ENCODE measurements at regions of chr19 and their contacts with region 1.

Region 1: DNA sequence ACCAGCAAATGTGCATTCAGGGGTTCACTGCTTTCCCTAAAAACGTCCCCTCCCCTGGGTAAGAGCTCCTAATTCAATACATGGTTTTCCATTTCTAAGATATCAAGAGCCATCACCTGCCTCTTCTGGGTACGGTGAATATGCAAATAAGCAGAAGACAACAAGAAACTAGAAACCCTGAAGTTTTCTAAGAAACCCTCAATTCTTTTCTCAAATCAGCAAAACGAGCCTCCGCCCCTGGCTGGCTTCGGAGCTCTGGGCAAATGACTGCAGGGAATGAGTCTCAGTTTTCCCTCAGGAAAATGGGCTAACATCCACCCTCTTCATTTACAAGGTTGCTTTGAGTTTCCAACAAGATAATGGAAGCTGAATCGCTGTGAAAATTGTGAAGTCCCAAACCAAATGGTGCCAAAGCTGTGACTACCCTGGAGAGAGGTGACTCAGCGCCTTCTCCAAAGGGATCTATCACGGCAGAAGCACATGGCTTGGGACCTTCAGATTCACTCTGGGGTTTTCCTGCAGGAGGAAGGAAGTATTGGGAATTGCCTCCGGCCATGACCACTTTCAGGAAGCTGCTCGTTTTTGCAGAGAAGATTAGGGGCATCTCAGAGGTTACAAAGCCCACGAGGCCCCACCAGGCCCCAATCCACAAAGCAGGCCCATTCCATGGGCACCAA is 26.6 kb downstream of the KLF2 start:
- DNase-seq: peak; percentile 77
- H3K4me3 ChIP-seq: no peak overlapping the region
- H3K27ac ChIP-seq: peak overlapping the region; percentile 51
- H3K4me1 ChIP-seq: peaks cover 32% of the 10 kb centered on the region
- H3K27me3 ChIP-seq: no peaks in the 10 kb centered on the region
- CTCF ChIP-seq: no peak
- POLR2A ChIP-seq: no peak

Region 2: GRCh38 chr19:16051254-16052025 is 299.8 kb before region 1 on chr19:
- CTCF ChIA-PET with region 1: no interaction called
- POLR2A ChIA-PET with region 1: no interaction called
- dilution Hi-C with region 1: no loop called
- intact Hi-C with region 1: no loop called
- DNase-seq: peak; percentile 47
- H3K4me3 ChIP-seq: no peak overlapping the region
- H3K27ac ChIP-seq: no peak overlapping the region
- H3K4me1 ChIP-seq: no peaks in the 10 kb centered on the region
- H3K27me3 ChIP-seq: peaks cover 0 to 3% of the 10 kb centered on the region in 2 experiments
- CTCF ChIP-seq: peak in 1 of 2 donors; percentile 10
- POLR2A ChIP-seq: no peak

Region 3: GRCh38 chr19:16062789-16063188 is 288.5 kb before region 1 on chr19:
- CTCF ChIA-PET with region 1: no interaction called
- POLR2A ChIA-PET with region 1: no interaction called
- dilution Hi-C with region 1: no loop called
- intact Hi-C with region 1: no loop called
- DNase-seq: peak; percentile 45
- H3K4me3 ChIP-seq: no peak overlapping the region
- H3K27ac ChIP-seq: no peak overlapping the region
- H3K4me1 ChIP-seq: peaks cover 21% of the 10 kb centered on the region
- H3K27me3 ChIP-seq: no peaks in the 10 kb centered on the region
- CTCF ChIP-seq: peak; percentile 85 to 87
- POLR2A ChIP-seq: no peak

Region 4: DNA sequence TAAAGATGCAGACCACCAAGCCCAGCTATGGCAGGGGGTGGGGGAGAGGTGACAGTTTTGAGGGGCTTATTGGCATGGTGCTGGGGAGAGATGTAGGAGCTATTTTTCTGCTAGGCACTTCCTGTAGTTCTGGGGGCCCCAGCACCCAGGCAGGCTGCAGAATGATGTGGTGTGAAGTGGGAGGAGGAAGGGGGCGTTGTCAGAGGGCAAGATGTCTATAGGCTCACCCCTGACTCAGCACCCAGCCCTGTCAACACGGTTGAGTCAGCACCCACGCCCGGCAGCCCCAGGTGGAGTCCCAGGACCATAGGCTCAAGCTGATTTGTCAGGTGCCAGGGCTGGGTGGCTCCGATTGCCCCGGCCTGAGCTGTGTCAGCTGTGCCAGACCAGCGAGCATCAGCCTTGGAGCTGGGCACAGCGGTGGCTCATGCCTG is 20.9 kb before region 1 on chr19:
- CTCF ChIA-PET with region 1: interaction called, 3 read pairs
- POLR2A ChIA-PET with region 1: no interaction called
- dilution Hi-C with region 1: no loop called
- intact Hi-C with region 1: loop called (anchors 2 kb)
- DNase-seq: peak; percentile 81
- H3K4me3 ChIP-seq: no peak overlapping the region
- H3K27ac ChIP-seq: no peak overlapping the region
- H3K4me1 ChIP-seq: peaks cover 28% of the 10 kb centered on the region
- H3K27me3 ChIP-seq: no peaks in the 10 kb centered on the region
- CTCF ChIP-seq: no peak
- POLR2A ChIP-seq: no peak

Region 5: GRCh38 chr19:16338470-16339360 is 12.6 kb before region 1 on chr19:
- CTCF ChIA-PET with region 1: interaction called, 8 read pairs
- POLR2A ChIA-PET with region 1: interaction called, 5 read pairs
- dilution Hi-C with region 1: no loop called
- intact Hi-C with region 1: loop called (anchors 1 kb)
- DNase-seq: peak; percentile 86
- H3K4me3 ChIP-seq: no peak overlapping the region
- H3K27ac ChIP-seq: peak overlapping the region; percentile 91
- H3K4me1 ChIP-seq: peaks cover 34% of the 10 kb centered on the region
- H3K27me3 ChIP-seq: no peaks in the 10 kb centered on the region
- CTCF ChIP-seq: peak in 1 of 2 donors; percentile 4
- POLR2A ChIP-seq: no peak

Region 6: DNA sequence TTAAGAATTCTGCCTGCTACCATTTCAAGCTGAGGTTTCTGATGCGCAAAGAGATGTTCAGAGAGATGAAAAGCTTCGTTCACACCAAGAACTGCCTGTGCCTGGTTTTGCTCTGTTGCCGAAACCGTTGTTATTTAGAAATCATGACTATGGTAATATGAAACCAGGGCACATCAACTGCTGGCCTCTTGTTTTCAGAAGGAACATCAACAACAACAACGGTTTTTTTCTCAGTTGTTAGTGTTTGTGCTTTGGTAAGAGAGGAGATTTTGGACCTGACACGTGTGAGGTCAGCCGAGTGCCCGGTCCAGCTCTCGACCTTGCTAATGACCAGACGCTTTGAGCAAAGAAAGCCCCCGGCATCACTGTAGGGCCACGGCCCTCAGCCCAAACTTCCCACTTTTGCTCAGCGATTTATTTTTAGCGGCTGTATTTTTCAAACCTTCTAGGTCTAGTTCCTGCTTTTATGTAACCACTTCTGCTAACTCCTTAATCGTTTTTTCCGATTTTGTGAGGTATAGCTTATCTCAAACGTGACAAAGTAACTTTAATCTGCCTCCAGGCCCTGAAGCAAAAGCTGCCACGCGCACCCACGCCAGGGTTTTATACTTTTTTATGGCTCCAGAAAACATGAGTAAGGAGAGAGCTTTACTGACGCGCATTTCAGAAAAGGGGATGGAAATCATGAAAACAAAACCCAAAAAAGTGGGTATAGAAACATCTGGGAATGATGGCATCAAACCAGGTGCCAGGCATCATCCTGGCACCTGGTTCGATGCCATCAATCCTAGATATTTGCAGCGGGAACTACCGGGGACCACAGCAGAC is 15.4 kb after region 1 on chr19:
- CTCF ChIA-PET with region 1: no interaction called
- POLR2A ChIA-PET with region 1: no interaction called
- dilution Hi-C with region 1: no loop called
- intact Hi-C with region 1: no loop called
- DNase-seq: no peak
- H3K4me3 ChIP-seq: no peak overlapping the region
- H3K27ac ChIP-seq: no peak overlapping the region
- H3K4me1 ChIP-seq: no peaks in the 10 kb centered on the region
- H3K27me3 ChIP-seq: no peaks in the 10 kb centered on the region
- CTCF ChIP-seq: no peak
- POLR2A ChIP-seq: no peak

Region 7: DNA sequence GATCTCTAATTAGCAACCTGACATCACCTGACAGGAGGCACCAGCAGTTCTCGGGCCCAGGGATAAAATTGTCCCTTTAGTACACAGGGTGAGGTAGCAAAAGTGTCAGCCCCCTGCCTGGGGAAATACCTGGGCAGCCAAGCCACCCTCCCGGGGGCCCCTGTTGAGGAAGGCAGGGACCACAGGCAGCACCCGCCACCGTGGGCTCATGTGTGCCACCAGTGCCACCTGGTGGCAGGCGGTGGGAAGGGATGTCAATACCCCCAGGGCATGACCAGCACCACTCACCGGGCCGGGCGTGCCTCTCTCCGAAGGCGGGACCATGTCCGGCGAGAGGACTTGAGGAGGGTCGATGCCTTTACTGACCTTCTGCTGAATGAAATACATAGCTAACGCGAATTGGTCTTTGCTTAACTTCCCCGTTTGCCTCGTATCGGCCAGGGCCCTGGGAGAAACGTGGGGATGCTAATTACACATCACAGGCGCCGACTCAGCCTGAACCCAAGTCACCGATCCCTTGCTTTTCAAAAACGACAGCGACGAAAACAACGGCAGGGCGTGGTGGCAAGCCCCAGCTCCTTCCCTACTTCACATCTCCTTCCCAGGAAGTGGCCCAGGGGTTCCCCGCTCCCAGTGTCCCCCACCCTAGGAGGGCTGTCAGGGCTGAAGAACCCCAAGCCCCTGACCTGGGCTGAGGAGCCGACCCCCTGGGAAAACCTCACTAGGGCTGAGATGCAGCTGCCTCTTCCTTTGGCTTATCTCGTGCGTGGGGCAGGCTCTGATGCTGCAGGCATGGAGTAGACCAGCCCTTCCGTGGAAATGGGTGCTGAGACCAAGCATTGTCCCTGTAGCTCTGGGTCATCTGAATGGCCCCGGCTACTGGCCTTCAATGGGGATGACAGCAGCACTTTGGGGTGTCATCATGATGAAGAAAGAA is 66.7 kb after region 1 on chr19:
- CTCF ChIA-PET with region 1: no interaction called
- POLR2A ChIA-PET with region 1: no interaction called
- dilution Hi-C with region 1: no loop called
- intact Hi-C with region 1: no loop called
- DNase-seq: peak; percentile 51
- H3K4me3 ChIP-seq: no peak overlapping the region
- H3K27ac ChIP-seq: no peak overlapping the region
- H3K4me1 ChIP-seq: peaks cover 14% of the 10 kb centered on the region
- H3K27me3 ChIP-seq: no peaks in the 10 kb centered on the region
- CTCF ChIP-seq: peak; percentile 87 to 95
- POLR2A ChIP-seq: no peak